ENCODE measurements at regions of chr7 and their contacts with region 1.

Region 1: GRCh38 chr7:2621061-2621828 is 10.5 kb upstream of the TTYH3 start:
- DNase-seq: no peak
- H3K4me3 ChIP-seq: no peak overlapping the region
- H3K27ac ChIP-seq: peak overlapping the region; percentile 31
- H3K27me3 ChIP-seq: no peaks in the 10 kb centered on the region
- CTCF ChIP-seq: no peak

Region 2: GRCh38 chr7:2582006-2582735 is 39.1 kb before region 1 on chr7:
- CTCF ChIA-PET with region 1: no interaction called
- POLR2A ChIA-PET with region 1: no interaction called
- DNase-seq: no peak
- H3K4me3 ChIP-seq: no peak overlapping the region
- H3K27ac ChIP-seq: no peak overlapping the region
- H3K27me3 ChIP-seq: no peaks in the 10 kb centered on the region
- CTCF ChIP-seq: no peak

Region 3: DNA sequence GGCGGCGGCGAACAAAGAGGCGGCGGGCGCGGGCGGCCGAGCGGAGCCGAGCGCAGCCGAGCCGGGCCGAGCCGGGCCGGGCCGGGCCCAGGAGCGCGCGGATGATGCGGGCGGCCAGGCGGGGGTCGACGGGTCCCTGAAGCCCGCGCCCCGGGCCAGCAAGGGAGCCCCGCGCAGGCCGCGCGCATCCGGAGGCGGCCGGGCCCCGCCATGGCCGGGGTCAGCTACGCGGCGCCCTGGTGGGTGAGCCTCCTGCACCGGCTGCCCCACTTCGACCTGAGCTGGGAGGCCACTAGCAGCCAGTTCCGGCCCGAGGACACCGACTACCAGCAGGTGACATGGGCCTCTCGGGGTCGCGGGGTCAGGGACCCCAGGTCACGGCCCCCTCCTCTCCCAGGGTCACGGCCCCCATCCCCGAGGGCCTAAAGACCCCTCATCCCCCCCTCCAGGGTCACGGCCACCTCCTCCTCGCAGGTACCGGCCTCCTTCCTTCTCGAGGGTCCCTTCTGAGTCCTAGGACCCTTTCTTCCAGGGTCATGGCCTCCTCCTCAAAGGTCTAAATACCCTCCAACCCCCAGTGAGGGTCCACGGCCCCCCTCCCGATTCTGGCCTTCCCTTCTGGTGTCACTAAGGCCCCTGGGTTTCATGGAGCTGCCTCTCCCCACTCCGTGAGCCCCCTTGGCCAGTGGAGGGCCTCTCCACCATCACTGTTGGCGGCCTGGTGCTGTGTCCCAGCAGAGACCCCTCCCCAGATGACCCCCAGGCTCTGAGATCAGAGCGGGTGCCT is 10.9 kb after region 1 on chr7 and contains the start of gene TTYH3:
- CTCF ChIA-PET with region 1: interaction called, 3 read pairs
- POLR2A ChIA-PET with region 1: interaction called, 10 read pairs
- DNase-seq: no peak
- H3K4me3 ChIP-seq: peak within 1 kb of the TSS; percentile 95
- H3K27ac ChIP-seq: peak within 1 kb of the TSS; percentile 94
- H3K27me3 ChIP-seq: no peaks in the 10 kb centered on the region
- CTCF ChIP-seq: no peak
- polyA plus RNA-seq, gene TTYH3: 30.8 and 50.7 TPM in 2 replicates

Region 4: DNA sequence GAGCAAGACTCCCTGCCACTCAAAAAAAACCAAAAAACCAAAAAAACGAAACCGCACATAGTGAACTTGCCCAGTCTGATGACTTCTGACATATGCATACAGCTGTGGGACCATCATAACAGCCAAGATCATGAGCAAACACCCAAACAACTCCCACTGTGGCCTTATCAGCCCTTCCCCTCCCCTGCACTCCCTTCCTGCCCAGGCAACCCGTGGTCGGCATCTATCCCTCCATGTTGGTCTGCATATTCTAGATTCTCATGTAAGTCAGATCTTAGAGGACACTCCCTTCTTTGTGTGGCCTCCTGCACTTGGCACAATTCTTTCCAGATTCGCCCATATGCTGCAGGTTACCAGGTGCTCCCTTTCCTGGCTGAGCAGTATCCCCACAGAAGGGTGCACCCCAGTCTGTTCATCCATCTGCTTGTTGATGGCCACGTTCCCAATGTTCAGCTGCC is 150.1 kb after region 1 on chr7:
- CTCF ChIA-PET with region 1: no interaction called
- POLR2A ChIA-PET with region 1: no interaction called
- DNase-seq: no peak
- H3K4me3 ChIP-seq: no peak overlapping the region
- H3K27ac ChIP-seq: no peak overlapping the region
- H3K27me3 ChIP-seq: no peaks in the 10 kb centered on the region
- CTCF ChIP-seq: no peak

Measured in AG04450 (cell line).